ENCODE measurements at regions of chr1 and their contacts with region 1.

Region 1: DNA sequence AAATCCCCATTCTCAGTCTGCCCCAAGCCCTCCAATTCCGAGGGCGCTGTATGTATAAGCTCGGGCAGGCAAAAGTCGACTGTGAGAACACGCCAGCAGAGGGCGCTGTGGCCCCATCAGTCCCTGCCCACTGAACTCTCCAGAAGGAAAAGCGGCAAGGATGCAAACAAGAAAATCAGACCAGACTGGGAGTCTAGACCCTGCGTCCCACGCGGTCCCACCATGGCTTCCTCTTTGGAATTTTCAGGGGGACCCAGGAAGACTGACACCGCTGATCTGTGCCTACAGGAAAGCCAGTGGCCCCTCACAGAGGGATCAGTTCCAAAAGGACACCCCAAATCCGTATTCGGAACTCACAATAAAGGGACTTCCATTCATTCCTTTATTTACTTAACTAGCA is 19.5 kb downstream of the TEX35 start:
- H3K4me3 Mint-ChIP-seq: no peak overlapping the region
- H3K27ac Mint-ChIP-seq: no peak overlapping the region
- H3K4me1 Mint-ChIP-seq: no peaks in the 10 kb centered on the region
- H3K27me3 Mint-ChIP-seq: no peaks in the 10 kb centered on the region

Region 2: DNA sequence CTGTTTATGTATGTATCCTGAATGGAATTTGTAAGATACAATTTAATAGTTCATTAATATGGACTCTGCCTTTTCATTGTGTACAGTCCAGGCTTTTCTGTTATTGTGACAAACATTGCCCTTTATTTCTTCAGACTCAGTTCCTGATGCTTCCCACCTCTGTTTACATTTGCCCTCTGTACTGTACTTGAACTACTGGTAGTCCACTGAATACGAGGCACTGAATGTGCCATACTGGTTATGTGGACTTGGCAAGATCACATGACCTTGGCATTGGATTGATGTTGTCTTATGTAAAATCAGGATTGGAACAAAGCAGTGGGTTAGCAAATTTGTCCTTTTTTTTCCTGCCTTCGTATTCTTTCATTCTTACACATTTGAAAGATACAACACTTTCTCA is 220.5 kb after region 1 on chr1:
- intact Hi-C with region 1: loop called (anchors 1 kb)
- H3K4me3 Mint-ChIP-seq: no peak overlapping the region
- H3K27ac Mint-ChIP-seq: no peak overlapping the region
- H3K4me1 Mint-ChIP-seq: no peaks in the 10 kb centered on the region
- H3K27me3 Mint-ChIP-seq: no peaks in the 10 kb centered on the region

Measured in dendritic cell treated with granulocyte-macrophage colony-stimulating factor and Interleukin-4, amounts not matched to agents 40 ng/mL and 50 ng/mL, for 4 days (primary cell).